IMR-90 (cell line): ENCODE measurements at regions of chr6 and their contacts with region 1.

Region 1: DNA sequence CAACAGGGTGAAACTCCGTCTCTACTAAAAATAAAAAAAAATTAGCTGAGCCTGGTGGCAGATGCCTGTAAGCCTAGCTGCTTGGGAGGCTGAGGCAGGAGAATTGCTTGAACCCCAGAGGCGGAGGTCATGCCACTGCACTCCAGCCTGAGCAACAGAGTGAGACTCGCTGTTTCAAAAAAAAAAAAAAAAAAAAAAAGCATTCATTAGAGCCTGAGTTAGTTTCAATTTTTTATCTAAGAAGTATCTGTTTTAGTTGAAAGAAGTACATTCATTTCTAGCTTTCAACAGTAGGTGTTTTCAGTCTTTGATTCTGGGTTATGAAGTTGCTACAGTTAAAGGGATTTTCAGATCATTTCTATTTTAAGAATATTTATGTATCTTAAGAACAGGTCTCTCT is 42.2 kb downstream of the ZNF292 start:
- DNase-seq: no peak
- ATAC-seq: no peak
- H3K4me3 ChIP-seq: no peak overlapping the region
- H3K27ac ChIP-seq: no peak overlapping the region
- H3K4me1 ChIP-seq: peaks cover 2% of the 10 kb centered on the region
- H3K27me3 ChIP-seq: no peaks in the 10 kb centered on the region
- CTCF ChIP-seq: no peak
- POLR2A ChIP-seq: no peak
- RAD21 ChIP-seq: no peak

Region 2: GRCh38 chr6:87001494-87001893 is 196.1 kb before region 1 on chr6:
- CTCF ChIA-PET with region 1: no interaction called
- POLR2A ChIA-PET with region 1: no interaction called
- dilution Hi-C with region 1: no loop called
- in situ Hi-C with region 1: no loop called
- intact Hi-C with region 1: no loop called
- DNase-seq: no peak
- ATAC-seq: no peak
- H3K4me3 ChIP-seq: no peak overlapping the region
- H3K27ac ChIP-seq: no peak overlapping the region
- H3K4me1 ChIP-seq: no peaks in the 10 kb centered on the region
- H3K27me3 ChIP-seq: no peaks in the 10 kb centered on the region
- CTCF ChIP-seq: no peak
- POLR2A ChIP-seq: no peak
- RAD21 ChIP-seq: no peak

Region 3: GRCh38 chr6:87154993-87155841 is 42.3 kb before region 1 on chr6 and contains the start of gene ZNF292:
- CTCF ChIA-PET with region 1: no interaction called
- POLR2A ChIA-PET with region 1: no interaction called
- dilution Hi-C with region 1: no loop called
- in situ Hi-C with region 1: no loop called
- intact Hi-C with region 1: loop called (anchors 5 kb)
- DNase-seq: peak; percentile 97
- ATAC-seq: peak; percentile 84
- H3K4me3 ChIP-seq: peak within 1 kb of the TSS; percentile 68
- H3K27ac ChIP-seq: peak within 1 kb of the TSS; percentile 94
- H3K4me1 ChIP-seq: peaks cover 13% of the 10 kb centered on the region
- H3K27me3 ChIP-seq: no peaks in the 10 kb centered on the region
- CTCF ChIP-seq: no peak
- POLR2A ChIP-seq: peak; percentile 59
- RAD21 ChIP-seq: no peak; the same call in 1 of the 2 replicates
- total RNA-seq, gene ZNF292: 28.3 and 36.9 TPM in 2 replicates

Region 4: GRCh38 chr6:87214831-87215230 is 17.3 kb after region 1 on chr6:
- CTCF ChIA-PET with region 1: no interaction called
- POLR2A ChIA-PET with region 1: no interaction called
- dilution Hi-C with region 1: no loop called
- in situ Hi-C with region 1: no loop called
- intact Hi-C with region 1: loop called (anchors 2 kb)
- DNase-seq: no peak
- ATAC-seq: no peak
- H3K4me3 ChIP-seq: no peak overlapping the region
- H3K27ac ChIP-seq: no peak overlapping the region
- H3K4me1 ChIP-seq: peaks cover 4% of the 10 kb centered on the region
- H3K27me3 ChIP-seq: no peaks in the 10 kb centered on the region
- CTCF ChIP-seq: no peak
- POLR2A ChIP-seq: no peak
- RAD21 ChIP-seq: no peak